Posterior vena cava (tissue), 2 donors: ENCODE measurements at regions of chr14 and their contacts with region 1.

Region 1: DNA sequence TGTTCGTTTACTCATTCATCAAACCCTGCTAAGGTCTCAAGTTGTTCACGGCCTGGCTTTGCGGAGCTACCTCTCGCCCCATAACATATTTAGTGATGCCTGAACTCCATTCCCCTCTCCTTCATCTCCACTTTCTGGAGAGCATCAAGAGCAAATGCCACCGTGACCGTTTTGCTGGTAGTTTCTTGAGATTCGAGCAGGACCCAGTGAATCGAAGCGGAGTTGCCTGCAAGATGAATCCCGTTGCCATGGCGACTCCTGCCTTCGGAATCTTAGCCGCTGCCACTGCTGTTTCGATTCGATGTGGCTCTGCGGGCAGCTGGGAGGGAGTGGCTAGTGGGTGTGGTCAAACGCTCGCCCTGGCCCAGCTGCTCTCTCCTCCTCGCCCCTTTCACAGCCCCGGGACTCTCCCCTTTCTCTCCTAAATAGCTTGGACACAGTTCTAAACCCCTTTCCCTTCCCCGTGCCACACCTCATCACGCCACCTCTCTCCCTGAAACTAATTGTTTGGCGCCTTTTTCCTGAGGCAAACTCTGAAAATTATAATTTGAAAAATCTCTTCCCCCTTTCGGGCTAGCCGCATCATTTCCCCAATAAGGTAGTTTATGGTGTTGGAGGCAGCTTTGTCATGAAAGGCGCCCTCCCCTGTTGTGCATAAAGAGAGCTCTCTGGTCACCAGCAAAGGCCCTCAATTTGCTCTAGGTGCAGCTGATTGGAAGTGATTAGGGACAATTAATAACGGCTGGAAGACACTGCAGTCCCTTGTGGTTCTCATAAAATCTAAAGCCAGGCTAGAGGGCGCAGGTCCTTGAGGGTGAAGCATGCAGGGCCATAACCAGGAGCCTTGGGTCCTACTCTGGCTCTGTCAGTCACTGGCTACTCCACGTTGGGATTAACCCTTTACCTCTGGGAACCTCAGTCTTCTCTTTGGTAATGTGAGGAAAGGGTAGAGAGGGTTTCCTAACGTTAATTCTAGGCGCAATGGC is 1.6 kb downstream of the DAAM1 start:
- DNase-seq: peak; percentile 95

Region 2: DNA sequence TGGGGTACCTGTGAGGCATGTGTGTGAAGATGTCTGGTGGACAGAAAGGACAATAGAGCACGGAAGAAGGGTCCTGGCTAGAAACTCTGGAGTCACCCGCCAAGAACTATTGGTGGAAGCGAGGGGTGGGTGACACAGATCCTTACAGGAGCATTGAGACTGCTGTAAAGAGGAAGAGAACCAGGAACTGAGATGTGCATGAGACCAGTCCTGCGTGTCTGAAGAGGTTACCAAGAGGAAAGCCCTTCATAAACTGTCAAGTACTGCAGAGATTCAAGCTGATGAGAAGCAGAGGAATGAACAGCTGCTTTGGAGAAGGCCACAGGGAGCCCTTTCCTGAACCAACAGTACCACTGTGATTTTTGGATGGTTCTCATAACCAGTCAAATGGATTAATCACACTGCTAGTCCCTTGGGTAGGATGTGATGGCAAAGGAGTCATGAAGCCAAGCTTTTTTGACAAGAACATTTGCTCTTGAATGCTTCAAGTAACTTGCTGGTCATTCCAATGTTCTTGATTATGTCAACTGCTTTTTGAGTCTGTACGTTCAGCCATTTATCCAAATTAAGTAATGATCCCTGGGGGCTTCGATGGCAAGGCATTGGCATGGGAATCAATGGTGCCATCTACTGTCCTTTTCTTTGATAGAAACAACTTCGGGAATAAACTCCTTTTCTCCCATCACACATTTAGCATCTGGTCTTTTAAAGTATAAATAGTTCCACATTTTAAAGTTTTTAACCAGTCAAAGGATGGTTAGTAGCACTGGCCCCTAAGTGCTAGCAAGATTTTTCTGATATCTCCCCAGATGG is 232.2 kb after region 1 on chr14:
- intact Hi-C with region 1: loop called (anchors 5 kb)
- DNase-seq: no peak

Region 3: DNA sequence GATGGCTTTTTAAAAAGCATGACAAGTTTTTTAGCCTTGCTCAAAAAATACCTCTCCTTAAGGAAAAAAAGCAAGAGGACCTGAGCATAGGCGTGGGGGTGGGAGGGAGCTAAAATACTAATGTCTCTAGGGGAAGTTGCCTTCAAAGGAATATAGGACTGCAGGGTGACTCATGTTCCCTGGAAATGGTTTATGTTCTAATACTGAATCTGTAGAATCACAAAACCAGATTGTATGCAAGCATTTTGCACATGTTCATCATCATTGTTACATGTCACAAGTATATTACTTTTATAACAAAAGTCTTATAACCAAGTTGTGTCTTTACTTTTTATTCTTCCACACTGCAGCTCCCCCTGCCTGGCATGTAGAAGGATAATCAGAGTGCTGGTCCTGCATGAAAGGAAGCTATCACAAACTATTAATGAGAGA is 238.5 kb after region 1 on chr14:
- intact Hi-C with region 1: loop called (anchors 5 kb)
- DNase-seq: no peak